ENCODE measurements at regions of chr22 and their contacts with region 1.

Region 1: DNA sequence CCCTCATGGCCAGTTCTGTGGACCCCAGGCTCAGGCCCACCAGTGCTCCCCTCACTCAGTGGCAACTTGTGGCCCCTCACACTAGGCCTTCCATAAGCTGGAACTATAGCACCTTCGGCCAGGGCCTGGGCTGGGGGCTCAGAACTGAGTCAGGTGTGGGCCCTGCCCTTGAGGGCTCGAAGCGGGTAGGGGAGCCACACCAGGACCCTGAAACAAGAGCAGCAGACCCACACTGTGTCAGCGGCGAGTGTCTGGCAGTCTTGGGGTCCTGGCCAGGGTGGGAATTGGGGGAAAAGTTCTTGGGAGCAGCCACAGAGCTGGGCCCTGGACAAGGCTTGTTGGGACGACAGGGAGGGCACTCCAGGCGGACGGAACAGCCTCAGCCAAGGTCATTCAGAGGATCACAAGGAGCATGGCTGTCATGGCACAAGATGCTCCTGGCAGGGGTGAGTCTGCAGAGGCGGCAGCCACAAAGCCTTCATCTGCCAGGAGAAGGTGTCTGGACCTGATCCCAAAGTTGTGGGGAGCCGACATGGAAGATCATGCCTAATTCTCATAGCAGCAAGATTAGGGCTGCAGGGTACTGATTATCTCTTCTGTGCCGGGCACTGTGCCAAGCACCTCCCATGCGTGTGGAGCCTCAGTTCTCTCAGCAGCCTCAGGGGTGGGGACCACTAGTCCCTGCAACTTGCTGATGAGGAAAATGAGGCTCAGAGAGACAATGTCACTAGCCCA is 50.7 kb downstream of the SHISAL1 start:
- DNase-seq: no peak
- H3K4me3 ChIP-seq: no peak overlapping the region
- H3K27ac ChIP-seq: no peak overlapping the region
- H3K4me1 ChIP-seq: no peaks in the 10 kb centered on the region
- H3K27me3 ChIP-seq: no peaks in the 10 kb centered on the region
- CTCF ChIP-seq: no peak

Region 2: DNA sequence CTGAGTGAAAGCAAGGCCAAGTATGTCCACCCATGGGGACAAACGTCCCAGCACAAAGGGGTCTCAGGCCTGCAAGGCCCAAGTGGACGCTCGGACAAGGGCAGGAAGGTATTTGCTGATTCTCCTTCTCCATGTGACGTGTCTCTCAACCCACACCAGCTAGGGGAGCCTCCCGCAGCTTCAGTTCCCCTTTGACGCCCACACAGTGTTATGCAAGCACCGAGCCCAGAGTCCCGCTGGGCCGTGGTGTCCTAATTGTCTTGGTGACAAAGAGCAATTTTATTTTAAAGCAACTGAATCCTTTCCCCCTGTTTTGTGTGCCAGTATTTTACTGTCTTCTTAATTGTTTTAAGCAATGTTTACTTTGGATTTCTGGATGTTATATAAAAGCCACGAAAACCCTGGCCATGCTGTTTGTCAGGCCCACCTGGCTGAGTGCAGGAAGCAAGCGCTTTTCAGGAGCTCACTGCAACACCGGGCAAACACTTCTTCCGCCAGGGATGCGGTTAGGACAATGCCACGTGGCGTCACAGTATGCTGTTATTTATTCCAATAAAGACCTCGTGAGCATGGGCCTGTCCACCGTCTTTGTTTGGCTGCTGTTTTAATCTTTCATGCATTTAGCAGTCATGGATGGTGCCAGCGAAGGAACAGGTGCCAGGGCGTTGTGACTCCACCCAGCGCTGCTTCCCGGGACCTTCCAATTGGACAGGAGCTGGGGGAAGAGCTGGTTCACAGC is 89.5 kb before region 1 on chr22:
- CTCF ChIA-PET with region 1: interaction called, 10 read pairs
- dilution Hi-C with region 1: no loop called
- in situ Hi-C with region 1: no loop called
- intact Hi-C with region 1: no loop called
- DNase-seq: no peak
- H3K4me3 ChIP-seq: no peak overlapping the region
- H3K27ac ChIP-seq: no peak overlapping the region
- H3K4me1 ChIP-seq: no peaks in the 10 kb centered on the region
- H3K27me3 ChIP-seq: peaks cover 4% of the 10 kb centered on the region
- CTCF ChIP-seq: no peak

Region 3: GRCh38 chr22:44363272-44363979 is 101.4 kb after region 1 on chr22:
- CTCF ChIA-PET with region 1: no interaction called
- dilution Hi-C with region 1: no loop called
- in situ Hi-C with region 1: no loop called
- intact Hi-C with region 1: no loop called
- DNase-seq: peak; percentile 89
- H3K4me3 ChIP-seq: peak overlapping the region in 1 of 3 experiments; percentile 29
- H3K27ac ChIP-seq: peak overlapping the region; percentile 80
- H3K4me1 ChIP-seq: peaks cover 52% of the 10 kb centered on the region
- H3K27me3 ChIP-seq: no peaks in the 10 kb centered on the region
- CTCF ChIP-seq: no peak